ENCODE measurements at regions of chr16 and their contacts with region 1.

Region 1: DNA sequence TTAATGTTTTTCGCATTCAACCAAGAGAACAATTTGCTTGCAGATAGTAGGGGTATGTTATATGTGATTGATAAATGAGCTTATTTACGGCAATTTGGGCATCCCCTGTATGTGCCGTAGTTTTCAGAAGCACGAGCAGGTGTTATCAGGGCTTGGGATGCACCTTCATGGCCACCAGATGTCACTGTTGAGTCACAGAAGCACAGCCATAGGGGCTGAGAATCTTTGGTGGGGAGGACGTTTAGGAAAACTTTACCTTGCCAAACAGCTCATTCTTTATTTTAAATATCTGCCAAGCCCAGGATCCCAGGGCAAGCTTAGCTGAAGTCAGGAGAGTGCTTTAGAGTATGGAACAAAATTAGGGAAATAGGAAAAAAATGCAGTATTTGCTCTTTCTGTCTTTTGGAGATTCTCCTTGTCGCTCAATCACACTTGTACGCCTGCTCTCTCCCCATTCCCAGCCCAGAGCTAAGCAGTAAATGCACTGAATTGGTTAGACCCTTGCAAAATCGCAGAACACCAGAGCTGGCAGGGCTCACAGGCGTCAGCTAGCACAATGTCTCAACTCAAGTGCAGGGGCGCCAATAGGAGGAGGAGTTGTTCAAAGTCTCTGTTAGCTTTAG is 93.6 kb upstream of the MPHOSPH6 start:
- DNase-seq: peak; percentile 5
- ATAC-seq: peak; percentile 97
- H3K4me3 ChIP-seq: no peak overlapping the region
- H3K27ac ChIP-seq: no peak overlapping the region
- H3K4me1 ChIP-seq: no peaks in the 10 kb centered on the region
- H3K27me3 ChIP-seq: peaks cover 0 to 2% of the 10 kb centered on the region in 2 experiments; a peak in 1 of 4 replicates
- CTCF ChIP-seq: peak; percentile 87 to 95 (median 92)
- EP300 ChIP-seq: no peak
- POLR2A ChIP-seq: no peak
- RAD21 ChIP-seq: peak; percentile 88

Region 2: GRCh38 chr16:82195917-82196494 is 67.6 kb before region 1 on chr16:
- CTCF ChIA-PET with region 1: no interaction called
- POLR2A ChIA-PET with region 1: no interaction called
- RAD21 ChIA-PET with region 1: no interaction called
- SMC1A ChIA-PET with region 1: no interaction called
- in situ Hi-C with region 1: no loop called
- intact Hi-C with region 1: no loop called
- DNase-seq: no peak
- ATAC-seq: no peak
- H3K4me3 ChIP-seq: no peak overlapping the region
- H3K27ac ChIP-seq: no peak overlapping the region
- H3K4me1 ChIP-seq: no peaks in the 10 kb centered on the region
- H3K27me3 ChIP-seq: no peaks in the 10 kb centered on the region
- CTCF ChIP-seq: no peak
- EP300 ChIP-seq: no peak
- POLR2A ChIP-seq: no peak
- RAD21 ChIP-seq: no peak

Region 3: GRCh38 chr16:82240111-82240510 is 23.5 kb before region 1 on chr16:
- CTCF ChIA-PET with region 1: interaction called, 10 read pairs
- POLR2A ChIA-PET with region 1: no interaction called
- RAD21 ChIA-PET with region 1: no interaction called
- SMC1A ChIA-PET with region 1: no interaction called
- in situ Hi-C with region 1: no loop called
- intact Hi-C with region 1: no loop called
- DNase-seq: no peak
- ATAC-seq: no peak
- H3K4me3 ChIP-seq: no peak overlapping the region
- H3K27ac ChIP-seq: no peak overlapping the region
- H3K4me1 ChIP-seq: no peaks in the 10 kb centered on the region
- H3K27me3 ChIP-seq: peaks cover 0 to 8% of the 10 kb centered on the region in 2 experiments; a peak in 2 of 4 replicates
- CTCF ChIP-seq: no peak
- EP300 ChIP-seq: no peak
- POLR2A ChIP-seq: no peak
- RAD21 ChIP-seq: no peak

Region 4: DNA sequence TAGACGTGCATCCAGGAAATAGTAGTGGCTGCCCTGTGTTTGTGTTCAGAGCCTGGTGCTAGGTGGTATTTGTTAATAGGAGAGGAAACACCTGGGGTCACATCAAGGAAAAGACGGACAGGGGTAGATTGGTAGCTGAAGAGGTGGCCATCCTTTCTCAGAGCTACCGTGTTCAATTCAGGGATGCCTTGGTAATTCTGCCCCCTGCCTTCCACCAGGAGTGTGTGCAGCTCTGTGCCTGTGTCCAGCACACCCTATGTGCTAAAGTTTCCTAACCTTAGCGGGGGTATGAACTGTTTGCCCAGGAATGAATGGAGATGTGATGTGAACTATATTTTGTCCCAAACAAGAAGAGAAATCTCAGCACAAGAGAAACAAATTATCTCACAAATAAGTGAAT is 80.5 kb after region 1 on chr16:
- CTCF ChIA-PET with region 1: interaction called, 25 read pairs
- POLR2A ChIA-PET with region 1: no interaction called
- RAD21 ChIA-PET with region 1: interaction called, 13 read pairs
- SMC1A ChIA-PET with region 1: interaction called, 4 read pairs
- in situ Hi-C with region 1: no loop called
- intact Hi-C with region 1: no loop called
- DNase-seq: no peak
- ATAC-seq: peak; percentile 48; the same call in 1 of the 3 replicates
- H3K4me3 ChIP-seq: no peak overlapping the region
- H3K27ac ChIP-seq: no peak overlapping the region
- H3K4me1 ChIP-seq: no peaks in the 10 kb centered on the region
- H3K27me3 ChIP-seq: no peaks in the 10 kb centered on the region
- CTCF ChIP-seq: peak; percentile 25 to 39 (median 31); a peak in 3 of 6 replicates
- EP300 ChIP-seq: no peak
- POLR2A ChIP-seq: no peak
- RAD21 ChIP-seq: peak; percentile 26; the same call in 1 of the 2 replicates

Region 5: DNA sequence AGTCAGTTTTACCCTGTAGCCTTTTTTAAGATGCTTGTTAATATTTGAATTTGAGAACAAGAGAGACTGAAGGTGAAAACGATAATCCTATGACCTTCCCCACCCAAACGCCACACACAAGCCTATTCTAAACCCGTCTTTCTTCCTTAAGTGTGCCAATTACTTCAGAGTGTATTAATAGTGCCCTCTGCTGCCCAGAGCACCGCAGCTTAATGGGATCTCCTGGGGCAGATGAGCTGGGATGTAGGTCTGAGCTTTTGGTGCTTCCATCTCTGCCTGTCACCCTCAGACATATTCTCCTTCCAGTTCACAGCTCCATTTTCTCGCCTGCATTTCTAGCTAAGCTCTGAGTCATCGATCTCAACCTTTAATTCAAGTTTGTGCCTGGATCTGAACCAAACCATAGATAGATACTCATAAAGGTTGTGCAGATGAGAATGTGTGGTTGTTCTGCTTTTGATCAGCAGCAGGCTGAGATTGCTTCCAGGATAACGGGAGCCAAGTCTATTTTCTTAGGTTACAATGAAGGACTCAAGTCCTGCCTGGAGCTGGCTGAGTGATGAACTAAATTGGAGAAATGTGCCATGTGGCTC is 316.8 kb after region 1 on chr16:
- CTCF ChIA-PET with region 1: interaction called, 4 read pairs
- POLR2A ChIA-PET with region 1: no interaction called
- RAD21 ChIA-PET with region 1: interaction called, 3 read pairs
- SMC1A ChIA-PET with region 1: no interaction called
- in situ Hi-C with region 1: no loop called
- intact Hi-C with region 1: loop called (anchors 10 kb)
- DNase-seq: no peak
- ATAC-seq: peak; percentile 53; the same call in 2 of the 3 replicates
- H3K4me3 ChIP-seq: no peak overlapping the region
- H3K27ac ChIP-seq: no peak overlapping the region
- H3K4me1 ChIP-seq: no peaks in the 10 kb centered on the region
- H3K27me3 ChIP-seq: no peaks in the 10 kb centered on the region
- CTCF ChIP-seq: peak; percentile 21 to 25 (median 25); a peak in 2 of 6 replicates
- EP300 ChIP-seq: no peak
- POLR2A ChIP-seq: no peak
- RAD21 ChIP-seq: peak; percentile 33

Region 6: DNA sequence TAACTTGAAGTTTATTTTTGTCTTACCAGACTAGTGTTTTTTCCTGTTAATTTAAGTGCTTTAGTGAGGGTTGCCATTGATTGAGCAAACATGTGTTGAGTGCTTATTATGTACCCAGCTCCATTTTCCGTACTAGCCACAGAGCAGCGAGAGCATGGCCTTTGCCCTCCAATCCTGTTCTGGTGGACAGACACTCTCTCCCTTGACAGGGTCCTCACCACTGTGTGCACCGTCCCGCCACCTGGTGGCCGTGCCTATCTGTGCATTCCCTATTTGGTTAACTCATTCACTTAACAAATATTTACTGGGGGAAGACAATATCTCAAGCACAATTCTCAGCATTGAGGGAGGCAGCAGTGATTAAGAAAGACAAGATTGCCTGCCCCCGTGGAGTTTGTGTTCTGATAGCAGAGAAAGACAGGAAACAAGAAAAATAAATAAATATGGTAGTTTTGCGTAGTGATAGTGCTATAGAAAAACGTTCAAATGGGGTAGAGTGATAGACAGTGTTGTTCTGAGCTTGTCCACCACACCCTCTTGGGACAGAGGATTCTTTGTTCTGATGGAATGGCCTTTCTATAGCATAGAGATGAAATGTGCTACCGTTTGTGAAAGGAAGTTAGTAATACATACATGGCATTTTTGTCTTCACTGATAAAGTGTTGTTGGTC is 376.2 kb after region 1 on chr16:
- CTCF ChIA-PET with region 1: interaction called, 13 read pairs
- POLR2A ChIA-PET with region 1: no interaction called
- RAD21 ChIA-PET with region 1: no interaction called
- SMC1A ChIA-PET with region 1: no interaction called
- in situ Hi-C with region 1: no loop called
- intact Hi-C with region 1: loop called (anchors 2 kb)
- DNase-seq: no peak
- ATAC-seq: peak; percentile 78
- H3K4me3 ChIP-seq: no peak overlapping the region
- H3K27ac ChIP-seq: no peak overlapping the region
- H3K4me1 ChIP-seq: 0 out of 2 replicates have a peak, but pooled peaks cover 2% of the 10 kb centered on the region
- H3K27me3 ChIP-seq: no peaks in the 10 kb centered on the region
- CTCF ChIP-seq: peak; percentile 77 to 90 (median 88)
- EP300 ChIP-seq: no peak
- POLR2A ChIP-seq: no peak
- RAD21 ChIP-seq: peak; percentile 62

Region 7: DNA sequence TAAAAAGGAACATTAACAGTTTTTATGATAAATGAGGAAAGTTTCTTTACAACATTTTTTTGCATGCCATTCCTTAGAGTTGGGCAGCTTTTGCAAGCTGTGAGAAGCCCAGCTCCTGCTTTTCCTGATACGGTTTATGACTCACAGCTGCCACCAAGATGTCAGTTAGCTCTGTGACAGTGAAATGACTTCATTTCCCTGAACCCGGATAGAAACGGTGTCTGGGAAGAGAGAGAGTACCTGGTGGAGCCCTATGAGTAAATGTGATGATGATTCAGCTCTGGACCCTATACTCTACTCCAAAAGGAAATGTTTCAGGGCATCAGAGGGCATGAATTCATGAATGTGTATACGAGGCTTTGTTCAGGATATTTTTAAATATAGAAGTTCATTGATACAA is 1177.9 kb after region 1 on chr16:
- CTCF ChIA-PET with region 1: interaction called, 14 read pairs
- POLR2A ChIA-PET with region 1: no interaction called
- RAD21 ChIA-PET with region 1: interaction called, 3 read pairs
- SMC1A ChIA-PET with region 1: interaction called, 11 read pairs
- in situ Hi-C with region 1: no loop called
- intact Hi-C with region 1: no loop called
- DNase-seq: no peak
- ATAC-seq: no peak
- H3K4me3 ChIP-seq: no peak overlapping the region
- H3K27ac ChIP-seq: no peak overlapping the region
- H3K4me1 ChIP-seq: no peaks in the 10 kb centered on the region
- H3K27me3 ChIP-seq: no peaks in the 10 kb centered on the region
- CTCF ChIP-seq: no peak
- EP300 ChIP-seq: no peak
- POLR2A ChIP-seq: no peak
- RAD21 ChIP-seq: no peak